Aorta (tissue), 5 donors: ENCODE measurements at regions of chrX and their contacts with region 1.

Region 1: GRCh38 chrX:150568320-150569154 is at the start of gene MTM1:
- DNase-seq: peak; percentile 96 to 98
- ATAC-seq: peak; percentile 96
- H3K4me3 ChIP-seq: peak within 1 kb of the TSS; percentile 30 to 40
- H3K27ac ChIP-seq: peak within 1 kb of the TSS in 1 of 2 donors; percentile 39
- H3K4me1 ChIP-seq: no peaks in the 10 kb centered on the region
- H3K27me3 ChIP-seq: no peaks in the 10 kb centered on the region
- total RNA-seq, gene MTM1: 13.6 to 20.5 TPM

Region 2: DNA sequence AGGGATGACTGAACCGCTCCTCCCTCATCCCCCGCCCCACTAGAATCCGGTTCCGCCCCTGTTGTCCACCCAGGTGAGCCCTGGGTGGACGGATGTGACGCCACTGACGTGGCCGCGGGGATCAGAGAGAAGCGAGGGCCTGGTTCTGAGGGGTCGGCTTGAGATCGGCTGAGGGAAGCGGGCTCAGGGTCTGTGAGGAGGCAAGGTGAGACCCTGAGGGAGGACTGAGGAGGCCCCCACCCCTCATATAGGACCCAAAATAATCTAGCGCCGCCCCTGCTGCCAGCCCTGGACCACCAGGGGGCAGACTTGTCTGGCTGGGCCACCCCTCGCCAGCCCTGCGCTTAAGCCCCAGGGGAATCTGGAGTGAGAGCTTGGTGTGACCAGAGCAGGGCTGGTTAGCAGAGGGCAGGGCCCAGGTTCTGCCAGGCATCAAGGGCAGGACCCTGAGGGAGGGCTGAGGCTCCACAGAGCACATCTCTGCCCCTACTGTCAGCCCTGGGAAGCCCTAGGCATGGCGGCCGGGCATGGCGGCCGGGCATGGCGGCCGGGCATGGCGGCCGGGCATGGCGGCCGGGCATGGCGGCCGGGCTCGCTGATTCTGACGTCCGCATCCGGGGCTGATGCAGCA is 687.3 kb before region 1 on chrX and contains the start of gene MAGEA8:
- intact Hi-C with region 1: no loop called
- DNase-seq: no peak
- ATAC-seq: no peak
- H3K4me3 ChIP-seq: no peak within 1 kb of the TSS
- H3K27ac ChIP-seq: no peak within 1 kb of the TSS
- H3K4me1 ChIP-seq: no peaks in the 10 kb centered on the region
- H3K27me3 ChIP-seq: no peaks in the 10 kb centered on the region
- total RNA-seq, gene MAGEA8: not detected

Region 3: DNA sequence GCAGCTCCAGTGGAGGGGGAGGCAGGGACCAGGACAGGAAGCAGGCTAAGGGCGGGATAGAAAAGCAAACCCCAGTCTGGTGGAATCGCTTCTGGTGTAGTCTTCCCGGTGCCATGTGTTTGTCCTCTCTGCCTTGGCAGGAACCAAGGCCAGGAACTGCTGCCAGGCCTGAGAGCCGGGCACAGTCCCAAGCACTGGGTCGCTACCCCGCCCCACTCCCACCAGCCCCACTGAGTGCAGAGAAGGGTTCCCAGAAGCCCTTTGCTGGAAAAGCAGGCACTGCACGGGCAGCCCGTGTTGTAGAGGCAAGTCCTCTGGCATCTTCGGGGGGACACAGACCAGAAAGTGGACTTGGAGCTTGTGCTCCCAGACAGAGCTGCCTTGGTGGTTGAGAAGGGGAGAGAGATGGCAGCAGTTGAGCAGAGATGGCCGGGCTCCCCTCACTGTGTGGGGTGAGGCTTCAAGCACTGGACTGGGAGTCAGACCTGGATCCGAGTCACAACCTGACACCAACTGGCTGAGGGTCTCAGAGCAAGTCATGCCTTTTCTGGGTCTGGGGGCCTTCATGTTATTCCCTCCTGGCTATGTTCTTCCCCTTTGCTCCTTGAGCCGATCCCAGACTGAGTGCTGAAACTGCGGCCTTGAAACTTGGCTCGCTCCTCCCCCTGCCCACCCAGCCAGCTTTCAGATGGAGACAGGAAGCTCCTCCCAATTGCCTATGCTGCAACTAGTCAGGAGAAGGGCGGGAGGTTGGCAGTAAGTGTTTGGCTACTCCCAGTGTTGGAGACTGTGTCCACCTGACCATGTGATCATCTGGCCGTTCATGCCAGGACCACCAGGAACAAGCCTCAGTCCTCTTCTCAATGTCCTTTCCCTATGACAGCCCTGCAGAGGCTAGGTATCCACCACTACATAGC is 59.8 kb before region 1 on chrX:
- intact Hi-C with region 1: loop called in 1 of 2 experiments (anchors 1 kb)
- DNase-seq: peak; percentile 82
- ATAC-seq: peak; percentile 80
- H3K4me3 ChIP-seq: no peak overlapping the region
- H3K27ac ChIP-seq: peak overlapping the region in 1 of 2 donors; percentile 75
- H3K4me1 ChIP-seq: no peaks in the 10 kb centered on the region
- H3K27me3 ChIP-seq: no peaks in the 10 kb centered on the region